ENCODE measurements at regions of chr7 and their contacts with region 1.

Region 1: DNA sequence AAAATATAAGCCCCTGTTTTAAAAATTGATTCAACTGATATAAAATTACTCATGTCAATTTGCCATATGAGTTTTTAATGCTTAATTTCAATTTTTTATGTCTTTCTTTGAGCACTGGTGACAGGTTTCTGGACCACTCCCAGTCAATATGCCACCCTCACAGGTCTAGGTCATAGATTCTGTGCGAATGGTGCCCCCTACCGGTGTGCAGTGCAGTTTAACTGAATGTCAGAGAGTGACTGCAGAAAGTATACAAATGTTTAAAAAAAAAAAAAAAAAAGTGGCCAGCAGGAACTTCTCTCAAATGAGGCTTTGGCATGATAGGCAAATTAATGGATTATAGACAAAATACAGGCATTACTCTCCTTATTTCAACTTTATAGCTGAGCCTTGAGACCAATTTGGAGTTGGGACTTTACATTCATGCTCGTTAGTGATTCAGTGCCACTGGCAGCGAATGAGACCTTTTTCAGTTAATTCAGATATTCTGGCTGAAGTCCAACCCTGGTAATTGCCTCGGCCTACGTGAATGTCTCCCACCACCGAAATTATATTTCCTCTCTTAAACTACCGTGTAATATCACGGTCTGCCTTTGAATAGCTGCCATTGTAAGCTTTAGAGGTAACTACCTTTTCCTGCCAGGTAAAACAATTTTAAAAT is 427.6 kb downstream of the PHTF2 start:
- DNase-seq: peak; percentile 18 to 26
- ATAC-seq: no peak
- H3K4me3 ChIP-seq: no peak overlapping the region
- H3K27ac ChIP-seq: no peak overlapping the region
- H3K4me1 ChIP-seq: peaks cover 0 to 10% (median 0%) of the 10 kb centered on the region in 9 donors
- H3K27me3 ChIP-seq: no peaks in the 10 kb centered on the region
- CTCF ChIP-seq: peak in 8 of 9 donors; percentile 24 to 52 (median 36)

Region 2: GRCh38 chr7:78134256-78134655 is 91.9 kb before region 1 on chr7:
- intact Hi-C with region 1: loop called in 1 of 10 experiments (anchors 10 kb)
- DNase-seq: no peak
- ATAC-seq: no peak
- H3K4me3 ChIP-seq: no peak overlapping the region
- H3K27ac ChIP-seq: no peak overlapping the region
- H3K4me1 ChIP-seq: peaks cover 0 to under 1% (median 0%) of the 10 kb centered on the region in 9 donors
- H3K27me3 ChIP-seq: no peaks in the 10 kb centered on the region
- CTCF ChIP-seq: peak in 7 of 9 donors; percentile 39 to 60 (median 45)